ENCODE measurements at regions of chr18 and their contacts with region 1.

Region 1: GRCh38 chr18:37537868-37538525 is 27.6 kb downstream of the CELF4 start:
- DNase-seq: peak; percentile 84
- ATAC-seq: peak; percentile 75

Region 2: GRCh38 chr18:37346048-37346447 is 191.9 kb before region 1 on chr18:
- intact Hi-C with region 1: loop called (anchors 10 kb)
- DNase-seq: no peak
- ATAC-seq: no peak

Region 3: GRCh38 chr18:37445368-37445767 is 92.6 kb before region 1 on chr18:
- intact Hi-C with region 1: loop called (anchors 10 kb)
- DNase-seq: no peak
- ATAC-seq: no peak